ENCODE measurements at regions of chr19 and their contacts with region 1.

Region 1: DNA sequence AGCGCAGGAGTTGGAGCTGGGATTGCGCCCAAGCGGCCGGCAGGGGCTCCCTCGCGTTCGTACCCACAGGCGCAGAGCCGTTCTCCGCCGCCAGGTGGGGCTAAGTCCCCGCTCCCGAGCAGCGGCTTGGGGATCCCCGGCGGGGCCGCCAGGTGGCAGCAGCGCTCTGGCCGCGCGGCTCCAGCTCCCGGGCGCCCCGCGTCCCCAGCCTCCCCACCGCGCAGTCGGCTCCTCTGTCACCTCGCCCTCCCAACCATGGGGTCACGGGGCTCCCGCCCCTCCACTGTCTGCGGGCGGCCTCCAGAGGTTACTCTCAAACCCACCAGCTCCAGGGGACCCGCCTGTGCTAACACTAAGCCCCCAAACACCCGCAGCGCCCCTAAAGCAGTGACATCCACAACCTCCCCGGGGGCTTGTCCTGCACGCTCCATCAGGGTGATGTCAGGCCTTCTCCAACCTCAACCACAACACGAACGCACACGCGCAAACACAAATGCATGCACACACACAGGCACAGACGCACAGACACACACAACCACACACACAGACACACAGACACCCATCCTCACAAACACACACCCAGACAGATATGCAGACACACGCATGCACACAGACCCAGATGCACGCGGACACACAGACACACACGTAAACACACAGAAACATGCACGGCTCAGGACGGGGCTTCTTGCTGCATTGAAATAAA is 18.4 kb upstream of the KCTD15 start:
- DNase-seq: no peak
- H3K4me3 ChIP-seq: no peak overlapping the region
- H3K27me3 ChIP-seq: 0 out of 2 replicates have a peak, but pooled peaks cover 2% of the 10 kb centered on the region
- CTCF ChIP-seq: peak; percentile 99

Region 2: GRCh38 chr19:33430674-33431277 is 347.5 kb before region 1 on chr19:
- CTCF ChIA-PET with region 1: interaction called, 125 read pairs
- POLR2A ChIA-PET with region 1: no interaction called
- DNase-seq: no peak
- H3K4me3 ChIP-seq: no peak overlapping the region
- H3K27me3 ChIP-seq: no peaks in the 10 kb centered on the region
- CTCF ChIP-seq: peak; percentile 92

Region 3: DNA sequence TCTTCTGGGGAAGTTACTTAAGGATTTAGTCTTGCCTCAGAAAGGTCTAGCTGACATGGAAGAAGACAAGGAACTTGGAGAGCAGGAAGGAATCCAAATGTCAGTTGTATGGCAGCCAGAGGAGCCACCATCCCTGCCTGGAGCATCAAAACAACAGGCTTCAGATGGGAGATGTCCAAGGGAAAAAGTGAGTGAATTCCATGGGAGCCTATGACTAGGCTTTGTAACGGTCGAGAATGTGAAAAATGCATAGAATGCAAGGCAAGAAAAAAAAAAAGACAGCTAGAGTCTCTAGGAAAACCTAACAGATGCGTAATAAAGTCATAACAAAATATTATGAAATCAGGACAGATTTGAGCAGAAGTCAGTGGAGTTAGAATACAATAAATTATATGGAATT is 210.3 kb after region 1 on chr19:
- CTCF ChIA-PET with region 1: interaction called, 47 read pairs
- POLR2A ChIA-PET with region 1: no interaction called
- DNase-seq: no peak
- H3K4me3 ChIP-seq: no peak overlapping the region
- H3K27me3 ChIP-seq: no peaks in the 10 kb centered on the region
- CTCF ChIP-seq: no peak

Region 4: DNA sequence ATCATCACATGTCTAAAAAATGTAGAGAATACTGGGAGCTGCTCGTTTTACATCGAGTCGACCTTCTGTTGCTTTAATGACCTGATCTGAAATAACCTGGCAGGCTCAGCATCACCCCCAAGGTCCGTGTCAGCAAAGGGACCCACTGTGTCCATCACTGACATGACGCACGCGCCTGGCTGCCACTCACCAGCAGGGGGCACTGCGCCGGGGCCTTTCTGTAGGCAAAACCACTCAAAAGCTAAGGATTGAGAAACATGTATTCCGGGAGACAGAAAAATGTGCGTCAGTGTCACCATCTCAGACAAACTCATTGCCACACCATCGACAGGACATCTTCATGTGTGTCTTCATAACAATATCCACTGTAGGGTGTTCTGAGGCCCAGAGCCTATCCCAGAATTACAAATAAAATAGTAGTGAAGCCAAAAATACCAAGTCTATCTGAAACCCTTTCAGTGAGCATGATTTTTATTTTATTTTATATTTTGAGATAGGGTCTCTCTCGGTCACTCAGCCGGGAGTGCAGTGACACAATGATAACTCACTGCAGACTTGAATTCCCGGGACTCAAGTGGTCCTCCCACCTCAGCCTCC is 263.8 kb after region 1 on chr19:
- CTCF ChIA-PET with region 1: interaction called, 15 read pairs
- POLR2A ChIA-PET with region 1: no interaction called
- DNase-seq: no peak
- H3K4me3 ChIP-seq: no peak overlapping the region
- H3K27me3 ChIP-seq: no peaks in the 10 kb centered on the region; the same call in 1 of the 2 replicates
- CTCF ChIP-seq: peak; percentile 93

Region 5: DNA sequence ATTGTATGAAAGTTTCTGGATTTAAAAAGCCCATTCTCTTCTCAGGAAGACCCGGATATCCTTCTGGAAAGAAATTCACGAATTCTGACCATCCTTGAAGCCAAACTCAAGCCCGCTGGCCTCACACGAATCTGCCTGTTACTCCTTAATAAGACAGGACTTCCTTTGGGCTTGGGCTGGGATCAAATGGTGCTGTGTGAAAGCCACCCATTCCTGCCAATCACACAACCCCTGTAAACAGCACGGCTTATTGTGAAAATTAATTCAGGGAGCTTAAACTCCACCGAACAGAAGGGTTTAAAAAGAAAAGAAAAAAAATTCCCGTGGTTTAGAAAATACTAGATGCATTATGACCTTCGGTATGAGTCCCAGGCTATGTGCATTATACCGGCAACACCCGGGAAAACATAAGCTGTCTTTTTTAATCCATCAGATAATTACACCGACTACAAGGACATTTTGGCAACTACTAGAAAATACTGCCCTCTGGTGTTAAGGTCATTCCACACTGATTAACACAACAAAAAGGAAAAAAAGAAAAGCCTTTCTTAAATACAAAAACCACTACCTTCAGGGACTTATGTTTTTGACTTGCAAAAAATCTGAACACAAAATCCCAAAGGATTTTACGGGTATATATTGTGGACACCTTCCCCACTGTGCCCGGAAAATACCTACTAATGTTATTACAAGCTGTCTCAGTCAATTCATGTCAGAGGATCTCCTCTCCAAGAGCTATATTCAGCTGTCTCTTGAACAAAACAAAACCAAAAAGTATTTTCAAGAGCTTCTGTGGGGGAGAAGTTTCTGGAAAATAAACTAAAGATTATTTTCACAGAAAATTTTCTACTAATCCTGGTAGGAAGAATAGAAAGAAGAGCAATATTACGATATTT is 318.0 kb after region 1 on chr19:
- CTCF ChIA-PET with region 1: interaction called, 91 read pairs
- POLR2A ChIA-PET with region 1: no interaction called
- DNase-seq: no peak
- H3K4me3 ChIP-seq: no peak overlapping the region
- H3K27me3 ChIP-seq: no peaks in the 10 kb centered on the region
- CTCF ChIP-seq: peak; percentile 54